ENCODE measurements at regions of chr19 and their contacts with region 1.

Region 1: GRCh38 chr19:14091081-14091812 is 696 bp upstream of the SAMD1 start:
- DNase-seq: peak; percentile 76
- ATAC-seq: peak; percentile 75
- H3K4me3 Mint-ChIP-seq: peak overlapping the region; percentile 81
- H3K27ac Mint-ChIP-seq: peak overlapping the region; percentile 98
- H3K4me1 Mint-ChIP-seq: peaks cover 20% of the 10 kb centered on the region
- H3K27me3 Mint-ChIP-seq: no peaks in the 10 kb centered on the region

Region 2: GRCh38 chr19:13162518-13163314 is 928.5 kb before region 1 on chr19:
- CTCF ChIA-PET with region 1: no interaction called
- POLR2A ChIA-PET with region 1: no interaction called
- intact Hi-C with region 1: loop called in 1 of 2 experiments (anchors 5 kb)
- DNase-seq: peak; percentile 96
- ATAC-seq: peak; percentile 56
- H3K4me3 Mint-ChIP-seq: peak overlapping the region; percentile 80
- H3K27ac Mint-ChIP-seq: peak overlapping the region; percentile 94
- H3K4me1 Mint-ChIP-seq: peaks cover 64% of the 10 kb centered on the region
- H3K27me3 Mint-ChIP-seq: no peaks in the 10 kb centered on the region

Region 3: GRCh38 chr19:14117668-14118164 is 26.5 kb after region 1 on chr19 and contains the start of gene PRKACA:
- CTCF ChIA-PET with region 1: interaction called, 8 read pairs
- POLR2A ChIA-PET with region 1: no interaction called
- intact Hi-C with region 1: loop called (anchors 1 to 2 kb)
- DNase-seq: peak; percentile 99
- ATAC-seq: peak; percentile 98
- H3K4me3 Mint-ChIP-seq: peak within 1 kb of the TSS; percentile 78
- H3K27ac Mint-ChIP-seq: peak within 1 kb of the TSS; percentile 77
- H3K4me1 Mint-ChIP-seq: peaks cover 41% of the 10 kb centered on the region
- H3K27me3 Mint-ChIP-seq: no peaks in the 10 kb centered on the region
- total RNA-seq, gene PRKACA: 58.1 to 68.7 TPM

Measured in activated CD4-positive, alpha-beta T cell treated with anti-CD3 and anti-CD28 coated beads for 36 hours (primary cell).